Vagina (tissue), 2 donors: ENCODE measurements at regions of chr6 and their contacts with region 1.

Region 1: GRCh38 chr6:107080036-107080435 is 35.3 kb downstream of the BEND3 start:
- DNase-seq: no peak
- H3K4me3 ChIP-seq: no peak overlapping the region
- H3K27ac ChIP-seq: no peak overlapping the region
- H3K4me1 ChIP-seq: no peaks in the 10 kb centered on the region
- H3K27me3 ChIP-seq: no peaks in the 10 kb centered on the region
- CTCF ChIP-seq: no peak
- POLR2A ChIP-seq: no peak

Region 2: DNA sequence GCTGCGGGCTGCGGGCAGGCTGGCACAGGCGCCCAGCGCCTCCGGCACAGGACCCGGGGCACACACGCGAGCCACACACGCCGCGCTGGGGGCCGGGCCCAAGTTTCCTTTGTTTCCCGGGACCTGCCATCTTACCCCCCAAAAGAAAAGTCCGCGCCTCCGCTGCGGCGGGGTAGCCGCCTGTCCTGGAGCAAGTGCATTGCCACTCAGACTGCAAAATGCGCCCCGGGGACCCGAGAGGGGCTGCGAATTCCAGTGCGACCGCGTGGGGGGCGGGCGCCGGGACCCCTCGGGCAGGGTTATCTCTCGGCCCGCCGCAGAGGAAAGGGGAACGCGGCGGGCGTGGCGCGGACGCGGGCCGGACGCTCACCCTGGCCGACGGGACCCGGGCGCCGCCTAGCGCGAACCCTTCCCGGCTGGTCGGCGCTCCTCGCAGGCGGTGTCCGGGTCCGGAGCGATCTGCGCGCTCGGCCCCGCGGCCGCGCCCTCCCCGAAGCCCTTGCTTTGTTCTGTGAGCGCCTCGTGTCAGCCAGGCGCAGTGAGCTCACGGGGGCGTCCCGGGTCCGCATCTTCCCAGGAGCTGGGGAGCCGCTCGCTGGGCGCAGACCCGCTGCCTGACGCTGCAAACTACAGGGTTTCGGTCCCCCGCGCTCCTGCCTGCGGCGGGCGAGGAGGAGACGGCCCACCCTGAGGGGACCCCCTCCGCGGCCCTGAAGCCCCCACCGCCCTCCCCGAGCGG is 104.9 kb before region 1 on chr6:
- intact Hi-C with region 1: no loop called
- DNase-seq: no peak
- H3K4me3 ChIP-seq: peak overlapping the region; percentile 50 to 59
- H3K27ac ChIP-seq: peak overlapping the region; percentile 57
- H3K4me1 ChIP-seq: peaks cover 25% of the 10 kb centered on the region
- H3K27me3 ChIP-seq: no peaks in the 10 kb centered on the region
- CTCF ChIP-seq: no peak
- POLR2A ChIP-seq: no peak

Region 3: DNA sequence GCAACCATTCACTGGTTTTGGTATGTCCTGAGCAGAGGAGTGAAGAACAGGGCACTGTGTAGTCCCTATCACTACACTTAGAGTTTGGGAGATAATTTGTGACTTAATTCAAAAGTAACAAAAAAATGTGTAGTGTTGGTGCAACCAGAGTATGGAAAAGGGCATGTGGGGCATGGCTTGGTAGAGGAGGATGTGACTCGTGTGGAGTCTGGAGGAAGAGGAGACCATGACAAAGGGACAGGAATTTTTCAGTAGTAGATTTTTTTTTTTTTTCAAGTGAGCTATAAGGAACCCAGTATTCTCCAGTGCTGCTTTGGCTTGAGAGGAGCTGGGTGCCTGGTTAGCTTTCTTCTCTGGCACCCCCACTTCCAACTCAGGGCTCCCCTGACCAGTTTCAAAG is 46.9 kb before region 1 on chr6:
- intact Hi-C with region 1: loop called (anchors 2 kb)
- DNase-seq: no peak
- H3K4me3 ChIP-seq: no peak overlapping the region
- H3K27ac ChIP-seq: no peak overlapping the region
- H3K4me1 ChIP-seq: peaks cover 15% of the 10 kb centered on the region
- H3K27me3 ChIP-seq: no peaks in the 10 kb centered on the region
- CTCF ChIP-seq: no peak
- POLR2A ChIP-seq: no peak